Endothelial cell of umbilical vein (primary cell): ENCODE measurements at regions of chr17 and their contacts with region 1.

Region 1: DNA sequence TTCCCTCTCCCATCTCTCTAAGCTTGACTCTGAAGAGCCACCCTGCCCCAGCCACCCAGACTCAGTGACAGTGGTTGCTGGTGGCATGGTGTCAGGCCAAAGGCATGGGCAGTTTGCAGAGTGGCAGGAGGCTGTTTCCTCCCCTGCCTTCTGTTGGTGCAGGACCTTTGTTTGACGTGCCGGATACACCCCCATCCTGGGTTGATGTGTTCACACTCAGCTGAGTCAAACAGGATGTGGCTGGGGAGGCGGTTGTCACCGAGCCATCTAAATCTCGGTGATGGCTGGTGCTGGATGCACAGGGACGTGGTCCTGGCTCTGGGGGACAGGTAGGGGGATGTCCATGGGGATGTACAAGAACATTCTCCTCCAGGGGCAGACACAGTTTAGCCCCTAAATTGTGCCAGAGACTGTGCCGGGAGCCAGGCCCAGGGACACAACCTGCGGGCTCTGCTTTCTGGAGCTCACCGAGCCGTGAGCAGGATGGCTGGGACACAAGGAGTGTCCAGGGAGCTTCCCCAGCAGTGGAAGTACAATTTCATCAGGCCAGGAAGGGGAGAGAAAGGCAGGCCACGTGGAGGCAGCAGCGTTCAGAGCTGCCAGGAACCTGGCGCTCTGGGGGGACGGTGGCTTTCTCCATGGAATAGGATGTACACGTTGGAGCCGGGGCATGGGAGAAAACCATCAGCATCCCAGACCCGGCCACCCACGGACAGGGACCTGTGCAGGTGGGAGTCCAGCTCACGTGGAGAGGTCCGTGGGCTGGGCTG is 264.2 kb downstream of the SEC14L1 start:
- DNase-seq: peak; percentile 82
- H3K4me3 ChIP-seq: no peak overlapping the region
- H3K27ac ChIP-seq: peak overlapping the region; percentile 63
- H3K4me1 ChIP-seq: peaks cover 25% of the 10 kb centered on the region
- H3K27me3 ChIP-seq: no peaks in the 10 kb centered on the region
- CTCF ChIP-seq: no peak
- POLR2A ChIP-seq: no peak

Region 2: GRCh38 chr17:77372444-77373298 is 32.3 kb before region 1 on chr17:
- CTCF ChIA-PET with region 1: interaction called, 21 read pairs
- POLR2A ChIA-PET with region 1: no interaction called
- dilution Hi-C with region 1: no loop called
- intact Hi-C with region 1: loop called (anchors 1 kb)
- DNase-seq: peak; percentile 53
- H3K4me3 ChIP-seq: peak overlapping the region; percentile 38 to 91 (median 59)
- H3K27ac ChIP-seq: no peak overlapping the region
- H3K4me1 ChIP-seq: peaks cover 15% of the 10 kb centered on the region
- H3K27me3 ChIP-seq: no peaks in the 10 kb centered on the region
- CTCF ChIP-seq: no peak
- POLR2A ChIP-seq: no peak

Region 3: GRCh38 chr17:77420804-77421629 is 16.0 kb after region 1 on chr17:
- CTCF ChIA-PET with region 1: interaction called, 128 read pairs
- POLR2A ChIA-PET with region 1: interaction called, 3 read pairs
- dilution Hi-C with region 1: no loop called
- intact Hi-C with region 1: loop called (anchors 1 kb)
- DNase-seq: peak; percentile 42
- H3K4me3 ChIP-seq: no peak overlapping the region
- H3K27ac ChIP-seq: no peak overlapping the region
- H3K4me1 ChIP-seq: peaks cover 35% of the 10 kb centered on the region
- H3K27me3 ChIP-seq: no peaks in the 10 kb centered on the region
- CTCF ChIP-seq: no peak
- POLR2A ChIP-seq: no peak

Region 4: DNA sequence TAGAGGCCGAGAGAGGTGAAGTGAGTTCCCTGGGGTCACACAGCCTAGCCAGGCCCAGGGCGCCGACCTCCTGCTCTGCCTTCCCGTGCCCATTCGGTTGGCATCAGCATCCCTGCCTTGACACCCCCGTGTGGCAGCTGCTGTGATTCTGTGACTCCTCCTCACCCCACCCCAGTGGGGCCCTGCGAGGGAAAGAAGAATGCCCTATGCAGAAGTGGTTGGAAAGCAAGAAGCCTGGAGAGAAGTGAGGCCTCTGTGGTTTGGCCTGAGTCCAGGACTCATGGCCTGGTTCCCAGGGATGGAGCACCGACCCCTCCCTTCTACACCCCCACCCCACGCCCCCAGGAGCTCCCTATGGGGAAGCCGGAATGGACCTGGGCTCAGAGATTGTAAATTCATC is 32.0 kb after region 1 on chr17:
- CTCF ChIA-PET with region 1: interaction called, 11 read pairs
- POLR2A ChIA-PET with region 1: no interaction called
- dilution Hi-C with region 1: no loop called
- intact Hi-C with region 1: no loop called
- DNase-seq: no peak
- H3K4me3 ChIP-seq: no peak overlapping the region
- H3K27ac ChIP-seq: no peak overlapping the region
- H3K4me1 ChIP-seq: peaks cover 13% of the 10 kb centered on the region
- H3K27me3 ChIP-seq: no peaks in the 10 kb centered on the region
- CTCF ChIP-seq: no peak
- POLR2A ChIP-seq: no peak

Region 5: DNA sequence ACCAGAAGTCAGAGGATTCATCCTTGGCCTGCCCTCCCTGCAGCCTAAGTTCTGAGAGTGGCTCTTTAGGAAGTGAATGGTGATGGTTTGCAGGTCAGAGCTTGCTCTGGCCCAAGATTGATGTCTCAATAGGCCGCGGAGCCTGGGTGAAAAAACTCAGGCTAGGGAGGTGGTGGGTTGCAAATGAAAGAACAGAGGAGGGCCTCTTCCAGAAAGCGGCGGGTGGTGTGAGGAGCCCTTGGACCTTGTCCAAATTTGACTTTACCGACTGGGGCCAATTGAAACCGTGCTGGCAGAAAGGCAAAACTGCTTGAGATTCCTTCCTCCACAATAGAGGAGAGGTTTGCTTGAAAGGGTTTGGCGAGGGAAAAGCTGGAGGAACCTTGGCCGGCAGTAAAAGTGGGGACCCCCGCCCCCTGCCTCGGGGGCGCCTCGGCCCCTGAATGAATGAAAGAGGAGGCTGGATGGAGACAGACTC is 67.0 kb after region 1 on chr17:
- CTCF ChIA-PET with region 1: interaction called, 11 read pairs
- POLR2A ChIA-PET with region 1: no interaction called
- dilution Hi-C with region 1: no loop called
- intact Hi-C with region 1: no loop called
- DNase-seq: no peak
- H3K4me3 ChIP-seq: no peak overlapping the region
- H3K27ac ChIP-seq: no peak overlapping the region
- H3K4me1 ChIP-seq: peaks cover 22% of the 10 kb centered on the region
- H3K27me3 ChIP-seq: no peaks in the 10 kb centered on the region
- CTCF ChIP-seq: no peak
- POLR2A ChIP-seq: no peak

Region 6: GRCh38 chr17:77666881-77667395 is 261.9 kb after region 1 on chr17:
- CTCF ChIA-PET with region 1: no interaction called
- POLR2A ChIA-PET with region 1: no interaction called
- dilution Hi-C with region 1: no loop called
- intact Hi-C with region 1: no loop called
- DNase-seq: no peak
- H3K4me3 ChIP-seq: no peak overlapping the region
- H3K27ac ChIP-seq: no peak overlapping the region
- H3K4me1 ChIP-seq: no peaks in the 10 kb centered on the region
- H3K27me3 ChIP-seq: no peaks in the 10 kb centered on the region
- CTCF ChIP-seq: no peak
- POLR2A ChIP-seq: no peak

Region 7: GRCh38 chr17:79242873-79243602 is 1838.0 kb after region 1 on chr17:
- CTCF ChIA-PET with region 1: no interaction called
- POLR2A ChIA-PET with region 1: no interaction called
- dilution Hi-C with region 1: no loop called
- intact Hi-C with region 1: no loop called
- DNase-seq: no peak
- H3K4me3 ChIP-seq: no peak overlapping the region
- H3K27ac ChIP-seq: no peak overlapping the region
- H3K4me1 ChIP-seq: no peaks in the 10 kb centered on the region
- H3K27me3 ChIP-seq: no peaks in the 10 kb centered on the region
- CTCF ChIP-seq: no peak
- POLR2A ChIP-seq: no peak